Activated naive CD4-positive, alpha-beta T cell treated with anti-CD3 and anti-CD28 coated beads for 36 hours (primary cell): ENCODE measurements at regions of chr5 and their contacts with region 1.

Region 1: DNA sequence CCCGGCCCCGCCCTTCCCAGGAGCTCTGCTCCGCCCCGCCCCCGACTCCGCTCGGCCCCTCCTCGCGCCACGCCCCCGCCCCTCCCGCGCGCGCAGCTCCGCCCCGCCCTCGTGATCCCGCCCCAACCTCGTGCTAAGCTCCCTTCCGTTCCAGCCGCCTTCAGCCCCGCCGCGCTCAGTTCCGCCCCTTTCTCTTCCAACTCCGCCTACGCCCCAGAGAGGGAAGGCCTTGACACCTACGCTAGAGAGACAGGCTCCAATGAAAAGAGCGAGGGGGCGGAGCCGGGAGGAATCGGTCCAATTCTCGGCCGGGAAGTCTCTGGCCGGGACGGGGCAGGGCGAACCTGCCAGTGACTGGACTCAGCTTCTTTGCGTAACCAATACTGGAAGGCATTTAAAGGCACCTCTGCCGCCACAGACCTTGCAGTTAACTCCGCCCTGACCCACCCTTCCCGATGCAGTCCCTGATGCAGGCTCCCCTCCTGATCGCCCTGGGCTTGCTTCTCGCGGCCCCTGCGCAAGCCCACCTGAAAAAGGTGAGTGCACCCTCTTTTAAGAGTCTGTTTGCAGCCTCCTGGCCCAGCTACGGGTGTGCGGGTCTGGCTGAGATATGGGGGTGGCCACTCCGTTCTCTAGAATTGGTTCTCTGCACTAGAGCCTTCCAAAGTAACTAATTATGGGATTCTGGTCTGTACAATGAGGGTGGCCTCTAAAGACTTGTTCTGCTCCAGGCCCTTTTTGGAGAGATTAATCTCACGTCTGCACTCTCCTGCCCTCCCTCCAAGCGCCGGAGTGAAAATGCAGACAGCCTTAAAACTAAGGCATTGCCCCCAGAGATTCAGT is at the start of gene GM2A:
- DNase-seq: peak; percentile 99
- H3K4me3 Mint-ChIP-seq: peak within 1 kb of the TSS; percentile 89
- H3K27ac Mint-ChIP-seq: peak within 1 kb of the TSS; percentile 90
- H3K4me1 Mint-ChIP-seq: peaks cover 43% of the 10 kb centered on the region
- H3K27me3 Mint-ChIP-seq: no peaks in the 10 kb centered on the region
- total RNA-seq, gene GM2A: 21.1 to 21.8 TPM

Region 2: GRCh38 chr5:151157426-151158286 is 95.3 kb before region 1 on chr5 and contains the start of gene ANXA6:
- CTCF ChIA-PET with region 1: no interaction called
- intact Hi-C with region 1: loop called (anchors 1 kb)
- DNase-seq: peak; percentile 71
- H3K4me3 Mint-ChIP-seq: peak within 1 kb of the TSS; percentile 92
- H3K27ac Mint-ChIP-seq: peak within 1 kb of the TSS; percentile 90
- H3K4me1 Mint-ChIP-seq: peaks cover 56% of the 10 kb centered on the region
- H3K27me3 Mint-ChIP-seq: no peaks in the 10 kb centered on the region
- total RNA-seq, gene ANXA6: 272 to 284 TPM

Region 3: DNA sequence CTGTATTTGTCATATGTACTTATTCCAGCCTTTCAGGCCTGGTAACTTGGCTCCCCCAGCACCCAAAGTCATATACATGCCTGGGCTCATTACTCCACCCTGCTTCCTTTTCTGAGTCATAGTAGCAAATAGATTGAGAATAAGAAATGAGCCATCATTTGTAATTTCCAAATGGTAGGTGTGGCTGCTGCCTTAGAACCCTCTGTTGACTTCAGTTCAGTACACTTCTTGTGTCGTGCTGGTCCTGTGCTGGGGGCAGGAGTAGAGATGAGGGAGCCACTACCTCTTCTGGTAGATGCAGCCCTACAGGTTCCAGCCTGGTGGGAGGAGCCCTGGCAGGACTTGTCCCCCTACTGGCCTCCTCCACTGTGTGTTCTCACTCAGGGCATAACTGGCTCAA is 11.1 kb after region 1 on chr5:
- CTCF ChIA-PET with region 1: no interaction called
- intact Hi-C with region 1: loop called (anchors 1 kb)
- DNase-seq: peak; percentile 65
- H3K4me3 Mint-ChIP-seq: no peak overlapping the region
- H3K27ac Mint-ChIP-seq: peak overlapping the region; percentile 84
- H3K4me1 Mint-ChIP-seq: peaks cover 13% of the 10 kb centered on the region
- H3K27me3 Mint-ChIP-seq: no peaks in the 10 kb centered on the region

Region 4: DNA sequence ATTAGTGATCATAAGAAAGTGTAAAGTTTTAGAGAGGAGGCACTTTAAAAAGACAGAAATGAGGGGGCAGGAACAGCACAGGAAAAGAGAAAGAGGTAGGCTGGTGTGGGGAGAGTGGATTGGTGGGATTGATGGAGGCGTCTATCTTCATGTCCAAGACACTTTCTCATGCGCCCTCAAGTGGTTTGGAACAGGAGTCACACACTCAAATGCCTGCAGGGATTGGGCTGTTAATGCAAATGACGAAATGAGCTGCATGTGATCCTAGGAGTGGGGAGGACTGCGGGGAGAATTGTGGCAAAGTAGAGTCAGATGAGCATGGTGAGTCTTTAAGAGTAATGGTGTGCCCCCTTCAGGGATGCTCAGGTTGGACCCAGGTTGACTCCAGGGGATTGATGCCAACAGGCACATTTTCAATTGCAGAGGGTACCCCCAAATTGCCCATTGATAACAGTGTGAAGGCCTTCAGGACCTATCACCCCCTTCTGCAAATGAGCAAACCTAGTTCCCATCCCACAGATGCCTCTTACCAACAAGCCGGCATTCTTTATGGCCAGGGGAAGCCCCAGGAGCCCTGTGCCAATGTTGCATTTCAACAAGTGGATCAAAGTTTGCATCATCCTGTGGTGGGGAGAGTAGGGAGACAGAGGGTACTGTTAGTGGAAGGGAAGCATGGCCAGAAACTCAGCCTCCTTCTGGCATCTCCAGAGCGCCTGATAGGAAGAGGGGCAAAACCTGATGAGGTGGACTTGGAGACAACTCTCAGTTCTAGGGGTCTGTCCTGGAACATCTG is 45.3 kb after region 1 on chr5:
- CTCF ChIA-PET with region 1: no interaction called
- intact Hi-C with region 1: loop called (anchors 1 kb)
- DNase-seq: peak; percentile 46
- H3K4me3 Mint-ChIP-seq: no peak overlapping the region
- H3K27ac Mint-ChIP-seq: no peak overlapping the region
- H3K4me1 Mint-ChIP-seq: no peaks in the 10 kb centered on the region
- H3K27me3 Mint-ChIP-seq: peaks cover 3% of the 10 kb centered on the region

Region 5: DNA sequence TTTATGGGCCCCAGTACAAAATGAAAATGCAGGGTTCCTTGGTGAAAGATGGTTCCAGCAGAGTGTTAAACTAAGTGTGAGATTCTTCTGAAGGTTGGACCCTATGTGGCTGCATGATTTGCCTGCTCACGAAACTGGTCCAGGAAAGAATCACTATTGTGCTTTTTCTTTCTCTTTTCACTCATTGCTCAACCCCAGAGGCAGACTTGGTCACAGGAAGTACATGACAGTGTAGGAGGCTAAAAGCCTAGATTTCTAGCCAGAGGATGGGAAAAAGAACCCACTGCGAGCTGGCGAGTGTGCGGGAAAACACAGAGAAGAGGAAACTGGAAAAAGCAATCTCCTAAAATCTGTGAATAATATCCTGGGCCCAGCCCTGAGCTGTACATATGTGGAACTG is 75.8 kb after region 1 on chr5:
- CTCF ChIA-PET with region 1: no interaction called
- intact Hi-C with region 1: no loop called
- DNase-seq: no peak
- H3K4me3 Mint-ChIP-seq: no peak overlapping the region
- H3K27ac Mint-ChIP-seq: no peak overlapping the region
- H3K4me1 Mint-ChIP-seq: no peaks in the 10 kb centered on the region
- H3K27me3 Mint-ChIP-seq: no peaks in the 10 kb centered on the region